PC-9 (cell line): ENCODE measurements at regions of chr10 and their contacts with region 1.

Region 1: GRCh38 chr10:69639291-69640195 is 9.5 kb downstream of the FAM241B start:
- DNase-seq: peak; percentile 46 to 62
- H3K4me3 ChIP-seq: no peak overlapping the region
- H3K27ac ChIP-seq: no peak overlapping the region
- H3K4me1 ChIP-seq: peaks cover 10% of the 10 kb centered on the region
- H3K27me3 ChIP-seq: peaks cover 14% of the 10 kb centered on the region; the same call in 1 of the 2 replicates
- CTCF ChIP-seq: peak; percentile 98

Region 2: DNA sequence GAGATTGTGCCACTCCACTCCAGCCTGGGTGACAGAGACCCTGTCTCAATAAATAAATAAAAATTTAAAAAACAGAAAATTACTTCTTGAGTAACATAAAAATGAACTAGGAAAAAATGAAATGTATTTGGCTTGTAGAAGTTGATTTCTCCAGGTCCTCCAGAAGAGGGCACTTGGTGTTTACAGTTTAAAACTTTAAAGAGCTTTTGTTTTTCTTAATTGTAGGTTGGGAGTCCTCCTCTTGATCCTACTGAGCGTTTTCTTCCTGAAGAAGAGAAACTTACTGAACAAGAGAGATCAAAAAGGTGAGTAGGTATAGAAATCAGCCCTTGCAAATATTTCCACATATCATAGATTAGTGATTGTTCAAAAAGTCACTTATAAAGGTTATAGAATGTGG is 634.7 kb before region 1 on chr10:
- CTCF ChIA-PET with region 1: no interaction called
- POLR2A ChIA-PET with region 1: no interaction called
- intact Hi-C with region 1: loop called (anchors 10 kb)
- DNase-seq: peak in 1 of 2 experiments; percentile 56
- H3K4me3 ChIP-seq: no peak overlapping the region
- H3K27ac ChIP-seq: no peak overlapping the region
- H3K4me1 ChIP-seq: no peaks in the 10 kb centered on the region
- H3K27me3 ChIP-seq: no peaks in the 10 kb centered on the region
- CTCF ChIP-seq: peak; percentile 84

Region 3: GRCh38 chr10:69515699-69516259 is 123.8 kb before region 1 on chr10:
- CTCF ChIA-PET with region 1: interaction called, 43 read pairs
- POLR2A ChIA-PET with region 1: no interaction called
- intact Hi-C with region 1: loop called (anchors 1 kb)
- DNase-seq: peak; percentile 57 to 74
- H3K4me3 ChIP-seq: no peak overlapping the region
- H3K27ac ChIP-seq: no peak overlapping the region
- H3K4me1 ChIP-seq: no peaks in the 10 kb centered on the region
- H3K27me3 ChIP-seq: no peaks in the 10 kb centered on the region
- CTCF ChIP-seq: peak; percentile 95

Region 4: GRCh38 chr10:69549959-69550358 is 89.6 kb before region 1 on chr10:
- CTCF ChIA-PET with region 1: interaction called, 13 read pairs
- POLR2A ChIA-PET with region 1: no interaction called
- intact Hi-C with region 1: no loop called
- DNase-seq: no peak
- H3K4me3 ChIP-seq: no peak overlapping the region
- H3K27ac ChIP-seq: no peak overlapping the region
- H3K4me1 ChIP-seq: no peaks in the 10 kb centered on the region
- H3K27me3 ChIP-seq: peaks cover 48% of the 10 kb centered on the region
- CTCF ChIP-seq: no peak